Panc1 (cell line): ENCODE measurements at regions of chr2 and their contacts with region 1.

Region 1: DNA sequence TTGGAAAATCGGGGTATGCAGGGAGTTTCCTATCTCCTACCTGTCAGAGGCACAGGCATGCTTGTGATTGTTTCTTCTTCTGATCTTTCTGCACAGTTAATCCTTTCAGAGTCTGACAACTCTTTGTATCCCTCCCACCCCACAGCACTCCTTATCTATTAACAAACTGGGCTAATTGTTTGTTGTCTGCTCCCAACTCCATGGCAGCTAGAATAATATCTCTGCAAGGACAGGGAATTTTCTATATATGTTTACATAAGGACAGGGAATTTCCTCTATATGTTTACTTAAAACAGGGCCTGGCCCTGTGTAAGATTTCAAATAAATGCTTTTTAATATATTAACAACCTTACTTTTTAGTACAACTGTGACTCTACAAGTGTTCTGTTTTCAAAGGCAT is 36.0 kb upstream of the VRK2 start:
- DNase-seq: no peak
- ATAC-seq: peak; percentile 75
- H3K4me3 ChIP-seq: no peak overlapping the region
- H3K27ac ChIP-seq: no peak overlapping the region
- H3K4me1 ChIP-seq: no peaks in the 10 kb centered on the region
- H3K27me3 ChIP-seq: no peaks in the 10 kb centered on the region
- CTCF ChIP-seq: no peak

Region 2: DNA sequence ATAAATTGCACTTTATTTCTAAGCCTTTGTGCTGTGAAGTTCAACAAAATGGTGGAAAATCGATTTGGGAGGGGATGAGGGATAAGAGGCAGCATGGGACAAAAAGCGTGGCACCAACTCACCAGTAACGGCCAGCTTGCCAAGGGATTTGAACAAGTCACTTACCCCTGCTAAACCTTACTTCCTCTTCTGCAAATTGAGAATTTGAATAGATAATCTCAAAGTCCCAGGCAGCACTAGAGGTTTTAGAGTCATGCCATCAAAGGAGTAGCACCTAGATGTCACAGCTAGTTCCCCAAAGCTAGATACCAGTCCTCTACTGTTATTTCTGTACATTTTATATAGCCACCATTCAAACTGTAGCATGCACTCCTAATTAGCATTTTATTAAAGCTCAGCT is 47.7 kb before region 1 on chr2:
- CTCF ChIA-PET with region 1: no interaction called
- POLR2A ChIA-PET with region 1: interaction called, 11 read pairs
- in situ Hi-C with region 1: no loop called
- intact Hi-C with region 1: no loop called
- DNase-seq: no peak
- ATAC-seq: no peak
- H3K4me3 ChIP-seq: no peak overlapping the region
- H3K27ac ChIP-seq: no peak overlapping the region
- H3K4me1 ChIP-seq: no peaks in the 10 kb centered on the region
- H3K27me3 ChIP-seq: no peaks in the 10 kb centered on the region
- CTCF ChIP-seq: no peak